Sigmoid colon (tissue), 7 donors: ENCODE measurements at regions of chr10 and their contacts with region 1.

Region 1: GRCh38 chr10:2173327-2173726 is 436.0 kb upstream of the ADARB2 start:
- DNase-seq: no peak
- H3K4me3 ChIP-seq: no peak overlapping the region
- H3K27ac ChIP-seq: no peak overlapping the region
- H3K4me1 ChIP-seq: no peaks in the 10 kb centered on the region
- H3K27me3 ChIP-seq: no peaks in the 10 kb centered on the region
- CTCF ChIP-seq: no peak
- EP300 ChIP-seq: no peak
- POLR2A ChIP-seq: no peak

Region 2: GRCh38 chr10:2111941-2112340 is 61.4 kb before region 1 on chr10:
- intact Hi-C with region 1: loop called (anchors 10 kb)
- DNase-seq: no peak
- H3K4me3 ChIP-seq: no peak overlapping the region
- H3K27ac ChIP-seq: no peak overlapping the region
- H3K4me1 ChIP-seq: no peaks in the 10 kb centered on the region
- H3K27me3 ChIP-seq: no peaks in the 10 kb centered on the region
- CTCF ChIP-seq: no peak
- EP300 ChIP-seq: no peak
- POLR2A ChIP-seq: no peak